HEK293 (cell line): ENCODE measurements at regions of chr16 and their contacts with region 1.

Region 1: DNA sequence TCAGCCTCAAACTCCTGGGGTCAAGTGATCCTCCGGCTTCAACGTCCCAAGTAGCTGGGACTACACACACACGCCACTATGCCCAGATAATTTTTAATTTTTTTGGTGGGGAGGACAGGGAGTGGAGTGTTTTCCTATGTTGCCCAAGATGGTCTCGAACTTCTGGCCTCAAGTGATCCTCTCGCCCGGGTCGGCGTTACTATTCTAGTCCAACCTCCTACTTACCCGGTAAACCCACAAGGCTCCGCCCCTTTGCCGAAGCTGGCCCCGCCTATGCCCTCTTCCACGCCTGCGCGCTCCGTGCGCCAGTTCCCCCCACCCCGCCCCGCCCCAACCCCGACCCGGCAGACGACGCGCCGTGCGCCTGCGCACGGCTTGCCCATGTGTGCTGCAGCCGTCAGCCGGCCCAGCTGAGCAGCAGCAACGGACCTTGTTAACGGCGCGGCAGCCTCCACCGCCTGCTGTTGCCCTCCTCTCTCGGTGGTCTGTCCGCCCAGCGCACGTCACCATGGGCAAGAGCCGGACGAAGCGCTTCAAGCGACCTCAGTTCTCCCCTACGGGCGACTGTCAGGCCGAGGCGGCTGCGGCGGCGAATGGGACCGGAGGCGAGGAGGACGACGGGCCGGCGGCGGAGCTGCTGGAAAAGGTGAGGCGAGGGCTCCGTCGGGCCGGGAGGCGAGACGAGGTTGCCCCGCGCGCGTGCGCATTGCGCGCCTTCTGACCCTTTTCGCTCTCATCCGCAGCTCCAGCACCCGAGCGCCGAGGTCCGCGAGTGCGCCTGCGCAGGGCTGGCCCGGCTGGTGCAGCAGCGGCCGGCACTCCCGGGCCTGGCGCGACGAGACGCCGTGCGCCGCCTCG is at the start of gene HEATR3:
- H3K4me3 ChIP-seq: peak within 1 kb of the TSS; percentile 98
- H3K27ac ChIP-seq: peak within 1 kb of the TSS; percentile 97
- H3K4me1 ChIP-seq: no peaks in the 10 kb centered on the region
- CTCF ChIP-seq: no peak

Region 2: DNA sequence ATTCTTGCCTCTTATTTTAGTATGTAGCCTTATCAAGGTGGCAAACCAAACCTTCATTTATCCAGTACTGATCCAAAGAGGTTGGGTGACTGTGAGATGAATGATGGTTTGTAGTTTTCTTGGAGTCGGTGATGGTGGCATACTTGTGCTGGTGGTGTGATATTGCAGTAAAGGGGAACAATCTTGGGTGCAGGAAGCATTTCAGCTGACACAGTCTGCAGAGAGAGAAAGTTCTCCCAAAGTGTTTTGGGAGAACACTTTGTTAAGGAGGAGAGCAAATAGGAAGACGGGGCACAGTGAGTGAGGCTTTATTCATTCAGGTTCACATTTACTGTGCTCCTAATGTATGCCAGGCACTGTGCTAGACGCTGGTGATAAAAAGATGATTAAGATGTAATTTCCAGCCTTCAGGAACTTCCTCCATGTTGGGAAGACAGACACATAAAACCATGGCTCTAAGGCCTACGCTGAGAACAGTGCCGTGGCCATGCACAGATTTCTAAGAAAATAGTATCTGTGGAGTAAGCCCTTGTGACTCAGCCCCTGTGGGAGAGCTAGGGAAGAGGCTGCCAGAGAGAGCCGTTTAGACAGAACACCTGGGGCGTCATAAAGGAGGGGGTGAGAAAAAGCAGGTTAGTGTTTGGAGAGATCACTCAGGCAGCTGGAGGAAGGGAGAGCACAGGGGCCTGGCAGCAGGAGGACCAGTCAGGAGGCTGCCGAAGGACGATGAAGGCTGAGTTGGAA is 13.7 kb after region 1 on chr16:
- CTCF ChIA-PET with region 1: interaction called, 11 read pairs
- POLR2A ChIA-PET with region 1: interaction called, 4 read pairs
- H3K4me3 ChIP-seq: no peak overlapping the region
- H3K27ac ChIP-seq: no peak overlapping the region
- H3K4me1 ChIP-seq: no peaks in the 10 kb centered on the region
- CTCF ChIP-seq: no peak

Region 3: DNA sequence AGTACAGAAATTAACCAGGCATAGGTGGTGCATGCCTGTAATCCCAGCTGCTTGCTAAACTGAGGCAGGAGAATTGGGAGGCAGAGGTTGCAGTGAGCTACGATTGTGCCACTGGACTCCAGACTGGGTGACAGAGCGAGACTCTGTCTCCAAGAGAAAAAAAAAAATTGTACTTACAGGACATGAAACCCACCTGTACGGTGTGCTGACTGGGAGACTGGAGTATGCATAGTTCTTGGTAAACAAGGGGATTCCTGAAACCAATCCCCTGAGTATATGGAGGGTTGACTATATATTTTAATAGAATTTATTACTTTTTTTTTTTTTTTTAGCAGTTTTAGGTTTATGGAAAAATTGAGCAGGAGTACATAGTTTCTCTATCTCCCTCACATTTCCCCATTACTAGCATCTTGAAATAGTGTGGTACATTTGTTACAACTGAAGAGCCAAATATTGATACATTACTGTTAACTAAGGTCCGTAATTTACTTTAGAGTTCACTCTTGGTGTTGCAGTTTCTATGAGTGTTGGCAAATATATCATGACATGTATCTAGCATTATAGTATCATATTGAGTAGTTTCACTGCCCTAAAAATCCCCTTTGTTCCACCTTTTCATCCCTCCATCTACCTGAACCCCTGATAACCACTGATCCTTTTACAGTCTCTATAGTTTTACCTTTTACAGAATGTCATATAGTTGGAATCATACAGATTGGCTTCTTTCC is 106.5 kb after region 1 on chr16:
- CTCF ChIA-PET with region 1: no interaction called
- POLR2A ChIA-PET with region 1: no interaction called
- H3K4me3 ChIP-seq: no peak overlapping the region
- H3K27ac ChIP-seq: no peak overlapping the region
- H3K4me1 ChIP-seq: 0 out of 2 replicates have a peak, but pooled peaks cover 2% of the 10 kb centered on the region
- CTCF ChIP-seq: no peak